Heart left ventricle (tissue), 16 donors: ENCODE measurements at regions of chr10 and their contacts with region 1.

Region 1: GRCh38 chr10:3785257-3785850 is 345 bp upstream of the KLF6 start:
- DNase-seq: peak; percentile 99 to 100 (median 99)
- ATAC-seq: peak; percentile 80 to 91 (median 82)
- H3K4me3 ChIP-seq: peak overlapping the region; percentile 66 to 100 (median 96)
- H3K27ac ChIP-seq: peak overlapping the region; percentile 98 to 100 (median 100)
- H3K4me1 ChIP-seq: peaks cover 0 to 35% (median 20%) of the 10 kb centered on the region in 12 donors
- H3K27me3 ChIP-seq: no peaks in the 10 kb centered on the region
- CTCF ChIP-seq: peak in 1 of 12 donors; percentile 21
- POLR2A ChIP-seq: peak; percentile 99 to 100

Region 2: DNA sequence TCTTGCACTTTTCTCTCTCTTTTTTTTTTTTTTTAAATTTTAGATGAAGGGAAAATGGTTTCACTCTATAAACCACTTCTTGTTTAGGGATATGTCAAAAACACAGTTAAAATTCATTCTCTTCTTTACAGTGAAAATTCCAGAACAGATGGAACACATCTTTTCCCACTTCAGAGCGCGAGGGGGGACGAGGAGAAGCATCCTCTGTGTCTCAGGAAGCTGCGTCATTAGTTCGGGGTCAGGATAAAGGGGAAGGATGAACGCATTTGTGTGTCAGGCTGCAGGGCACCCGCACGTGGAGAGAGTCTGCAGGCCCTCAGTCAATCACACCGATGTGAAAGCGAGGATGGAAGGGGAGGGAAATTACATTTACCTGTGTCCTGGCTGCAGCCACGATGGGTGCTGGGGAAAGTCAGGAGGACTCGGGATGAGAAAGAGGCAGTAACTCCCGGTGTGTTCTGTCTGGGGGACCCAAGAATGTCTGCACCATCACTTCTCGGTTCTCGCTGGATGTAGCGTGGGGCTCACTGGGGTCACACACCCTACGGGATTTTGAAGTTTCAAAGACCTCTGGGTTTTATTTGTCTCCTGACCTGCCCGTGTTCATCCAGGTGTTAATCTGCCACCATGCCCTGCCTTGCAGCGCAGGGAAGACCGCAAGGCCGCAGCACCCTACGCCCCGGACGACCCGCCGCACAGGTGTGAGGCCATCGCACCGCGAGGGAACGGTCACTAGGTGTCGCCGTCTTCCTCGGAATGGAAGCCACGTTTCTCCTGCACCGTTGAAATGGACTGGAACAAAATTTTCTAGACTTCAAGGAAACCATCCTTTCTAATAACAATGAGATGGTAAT is 546.1 kb before region 1 on chr10:
- intact Hi-C with region 1: loop called in 7 of 10 experiments (anchors 2 to 10 kb)
- DNase-seq: peak; percentile 70 to 85 (median 75)
- ATAC-seq: peak; percentile 59 to 88 (median 82)
- H3K4me3 ChIP-seq: peak overlapping the region in 8 of 12 donors; percentile 6 to 36 (median 24)
- H3K27ac ChIP-seq: peak overlapping the region in 8 of 12 donors; percentile 39 to 75 (median 54)
- H3K4me1 ChIP-seq: peaks cover 0 to 10% (median 3%) of the 10 kb centered on the region in 12 donors
- H3K27me3 ChIP-seq: no peaks in the 10 kb centered on the region
- CTCF ChIP-seq: peak; percentile 84 to 98 (median 94)
- POLR2A ChIP-seq: no peak

Region 3: DNA sequence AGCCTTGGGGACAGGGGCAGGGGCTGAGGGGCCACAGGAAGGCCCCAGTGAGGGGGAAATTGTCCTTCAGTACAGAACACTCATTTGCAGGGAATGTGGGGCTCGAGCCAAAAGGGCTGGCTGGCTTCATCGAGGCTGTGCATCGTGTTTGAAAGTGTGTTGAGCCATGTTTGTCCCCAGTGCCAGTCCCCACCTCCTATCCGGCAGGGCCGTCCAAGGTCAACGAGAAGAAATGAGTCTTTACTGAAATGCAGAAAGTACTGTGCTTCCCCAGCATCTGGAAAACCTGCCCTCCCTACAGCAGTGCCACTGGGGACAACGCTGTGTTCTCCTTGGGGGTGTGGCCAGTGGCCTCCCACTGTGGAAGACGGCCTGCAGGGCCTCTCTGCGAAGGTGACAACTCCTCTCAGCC is 214.5 kb before region 1 on chr10:
- intact Hi-C with region 1: loop called in 1 of 10 experiments (anchors 5 kb)
- DNase-seq: peak in 3 of 5 donors; percentile 37 to 71 (median 51)
- ATAC-seq: peak; percentile 16 to 78 (median 63)
- H3K4me3 ChIP-seq: no peak overlapping the region
- H3K27ac ChIP-seq: peak overlapping the region in 10 of 12 donors; percentile 5 to 58 (median 36)
- H3K4me1 ChIP-seq: peaks cover 0 to 37% (median 15%) of the 10 kb centered on the region in 12 donors
- H3K27me3 ChIP-seq: no peaks in the 10 kb centered on the region
- CTCF ChIP-seq: no peak
- POLR2A ChIP-seq: no peak

Region 4: GRCh38 chr10:3811291-3811870 is 26.0 kb after region 1 on chr10:
- intact Hi-C with region 1: loop called in 3 of 10 experiments (anchors 1 to 2 kb)
- DNase-seq: peak in 1 of 5 donors; percentile 72
- ATAC-seq: peak; percentile 37 to 69 (median 56)
- H3K4me3 ChIP-seq: peak overlapping the region in 5 of 12 donors; percentile 3 to 24 (median 15)
- H3K27ac ChIP-seq: peak overlapping the region; percentile 74 to 96 (median 88)
- H3K4me1 ChIP-seq: peaks cover 0 to 61% (median 56%) of the 10 kb centered on the region in 12 donors
- H3K27me3 ChIP-seq: no peaks in the 10 kb centered on the region
- CTCF ChIP-seq: no peak
- POLR2A ChIP-seq: no peak

Region 5: DNA sequence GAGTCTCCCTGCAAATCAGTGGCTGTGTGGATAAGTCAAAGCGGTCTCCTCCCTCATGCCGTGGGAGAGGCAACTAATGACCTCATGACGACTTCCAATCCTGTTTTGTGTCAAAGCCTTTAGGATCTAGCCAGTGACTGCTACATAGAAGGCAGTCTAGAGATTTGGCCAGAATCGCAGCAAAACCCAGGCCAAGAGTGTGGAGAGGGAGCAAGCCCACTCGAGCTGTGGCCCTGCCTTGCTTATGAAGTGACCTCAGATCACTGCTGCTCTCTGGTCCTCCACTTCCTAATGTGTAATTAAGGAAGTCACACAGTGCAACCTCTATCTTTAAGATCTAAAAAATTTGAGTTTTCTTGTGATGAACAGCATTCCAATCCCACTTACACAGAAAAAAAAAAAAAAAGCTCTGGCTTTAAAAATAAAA is 296.3 kb after region 1 on chr10:
- intact Hi-C with region 1: loop called in 8 of 10 experiments (anchors 5 to 10 kb)
- DNase-seq: peak in 3 of 5 donors; percentile 43 to 55 (median 47)
- ATAC-seq: peak in 3 of 4 donors; percentile 28 to 57 (median 57)
- H3K4me3 ChIP-seq: no peak overlapping the region
- H3K27ac ChIP-seq: peak overlapping the region in 10 of 12 donors; percentile 40 to 59 (median 52)
- H3K4me1 ChIP-seq: peaks cover 0 to 55% (median 32%) of the 10 kb centered on the region in 12 donors
- H3K27me3 ChIP-seq: no peaks in the 10 kb centered on the region
- CTCF ChIP-seq: no peak
- POLR2A ChIP-seq: no peak

Region 6: GRCh38 chr10:4512671-4513240 is 727.4 kb after region 1 on chr10:
- intact Hi-C with region 1: loop called in 3 of 10 experiments (anchors 5 to 10 kb)
- DNase-seq: peak; percentile 51 to 79 (median 69)
- ATAC-seq: peak; percentile 79 to 91 (median 88)
- H3K4me3 ChIP-seq: no peak overlapping the region
- H3K27ac ChIP-seq: peak overlapping the region; percentile 10 to 85 (median 70)
- H3K4me1 ChIP-seq: peaks cover 5 to 48% (median 30%) of the 10 kb centered on the region in 12 donors
- H3K27me3 ChIP-seq: no peaks in the 10 kb centered on the region
- CTCF ChIP-seq: peak; percentile 36 to 68 (median 54)
- POLR2A ChIP-seq: no peak